ENCODE measurements at regions of chr16 and their contacts with region 1.

Region 1: DNA sequence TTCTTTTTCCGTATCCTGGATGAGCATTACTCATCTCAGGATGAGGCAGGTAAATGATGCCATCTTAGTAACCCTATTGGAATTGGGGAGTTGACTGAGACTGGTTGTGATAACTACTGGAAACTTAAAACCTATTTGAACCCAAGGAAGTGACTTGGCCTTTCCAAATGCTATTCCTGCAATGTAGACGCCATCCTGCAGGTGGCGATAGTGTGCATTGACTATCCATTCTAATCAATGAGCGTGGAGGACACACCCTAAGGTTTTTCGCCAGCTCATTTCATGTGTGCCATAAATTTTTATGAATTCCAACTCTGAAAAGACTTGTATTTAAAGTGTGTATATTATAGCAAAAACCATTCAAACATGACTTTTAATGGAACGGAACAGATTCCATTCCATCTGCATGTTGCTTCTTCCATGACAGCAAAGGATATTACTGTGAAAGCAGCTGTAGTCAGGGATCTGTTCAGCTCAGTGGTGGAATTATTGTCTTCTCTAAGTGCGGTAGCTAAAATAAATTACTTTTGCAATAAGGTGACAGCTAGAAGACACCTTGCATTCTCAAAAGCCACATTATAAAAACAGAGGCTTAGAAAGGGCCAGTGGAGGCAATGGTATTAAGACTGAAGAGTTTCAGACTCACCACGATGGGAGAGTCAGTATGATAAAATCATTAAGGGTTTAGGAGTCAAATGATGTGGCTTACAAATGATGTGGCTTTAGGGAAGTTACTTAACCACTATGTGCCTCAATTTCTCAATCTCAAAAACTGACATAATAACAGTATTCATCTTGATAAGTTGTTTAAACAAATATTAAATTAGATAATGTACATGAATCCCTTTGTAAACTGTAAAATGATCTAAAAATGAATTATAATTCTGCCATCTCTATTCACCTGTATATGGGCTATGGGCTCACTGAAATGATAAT is 55.5 kb downstream of the SYT17 start:
- DNase-seq: peak; percentile 17 to 59 (median 44)
- H3K4me3 ChIP-seq: no peak overlapping the region
- H3K4me3 Mint-ChIP-seq: no peak overlapping the region
- H3K27ac ChIP-seq: no peak overlapping the region
- H3K27ac Mint-ChIP-seq: peak overlapping the region in 1 of 7 donors; percentile 60
- H3K4me1 ChIP-seq: peaks cover 9 to 11% of the 10 kb centered on the region in 2 donors
- H3K4me1 Mint-ChIP-seq: peaks cover 11% of the 10 kb centered on the region
- H3K27me3 ChIP-seq: no peaks in the 10 kb centered on the region
- H3K27me3 Mint-ChIP-seq: peaks cover 7 to 12% (median 8%) of the 10 kb centered on the region in 3 donors
- CTCF ChIP-seq: peak; percentile 65

Region 2: DNA sequence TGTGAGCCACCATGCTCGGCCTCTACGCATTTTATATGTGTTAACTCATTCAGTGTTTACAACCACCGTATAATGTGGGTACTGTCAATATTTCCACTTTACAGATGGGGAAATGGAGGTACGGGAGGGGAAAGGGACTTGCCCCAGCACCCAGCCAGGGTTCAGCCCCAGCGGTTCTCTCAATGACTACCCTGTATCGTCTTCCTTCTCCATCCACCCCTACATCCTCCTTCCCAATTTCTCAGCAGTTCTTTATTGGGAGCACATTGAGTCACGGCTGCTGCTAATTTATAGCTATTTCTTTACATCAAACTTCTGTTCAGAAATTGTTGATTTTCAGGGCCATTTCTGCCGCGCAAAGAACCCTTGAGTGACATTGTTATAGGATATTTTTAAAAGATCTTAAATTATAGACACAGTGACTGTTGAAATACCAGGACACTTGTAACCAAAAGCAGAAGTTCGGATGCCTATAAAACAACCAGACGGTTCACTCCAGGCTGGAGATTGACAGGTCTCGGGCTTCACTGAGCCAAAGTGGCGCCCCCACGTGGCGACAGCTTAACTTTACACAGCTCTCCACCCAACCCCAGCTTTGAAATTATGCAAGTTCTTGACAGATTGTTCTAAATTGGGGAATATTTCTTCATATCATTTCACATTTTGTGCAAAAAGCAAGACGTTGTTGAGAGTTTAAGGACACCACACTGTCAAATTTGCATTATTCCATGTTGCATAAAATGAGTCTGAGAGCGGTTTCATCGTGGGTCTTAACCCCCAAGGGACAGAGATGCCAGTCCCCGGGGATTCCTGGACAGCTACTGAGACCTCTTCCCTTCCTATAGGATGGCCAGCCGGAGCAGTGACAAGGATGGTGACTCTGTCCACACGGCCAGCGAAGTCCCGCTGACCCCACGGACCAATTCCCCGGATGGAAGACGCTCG is 43.7 kb before region 1 on chr16:
- intact Hi-C with region 1: loop called in 1 of 2 experiments (anchors 5 kb)
- DNase-seq: peak; percentile 87 to 91 (median 90)
- H3K4me3 ChIP-seq: peak overlapping the region in 1 of 3 experiments; percentile 38
- H3K4me3 Mint-ChIP-seq: no peak overlapping the region
- H3K27ac ChIP-seq: peak overlapping the region; percentile 49 to 74
- H3K27ac Mint-ChIP-seq: peak overlapping the region; percentile 61 to 94 (median 89)
- H3K4me1 ChIP-seq: peaks cover 56% of the 10 kb centered on the region in 2 donors
- H3K4me1 Mint-ChIP-seq: peaks cover 52% of the 10 kb centered on the region
- H3K27me3 ChIP-seq: no peaks in the 10 kb centered on the region
- H3K27me3 Mint-ChIP-seq: peaks cover 0 to 5% (median 0%) of the 10 kb centered on the region in 3 donors
- CTCF ChIP-seq: peak; percentile 92

Measured in CD14-positive monocyte (primary cell).